A673 (cell line): ENCODE measurements at regions of chrX and their contacts with region 1.

Region 1: DNA sequence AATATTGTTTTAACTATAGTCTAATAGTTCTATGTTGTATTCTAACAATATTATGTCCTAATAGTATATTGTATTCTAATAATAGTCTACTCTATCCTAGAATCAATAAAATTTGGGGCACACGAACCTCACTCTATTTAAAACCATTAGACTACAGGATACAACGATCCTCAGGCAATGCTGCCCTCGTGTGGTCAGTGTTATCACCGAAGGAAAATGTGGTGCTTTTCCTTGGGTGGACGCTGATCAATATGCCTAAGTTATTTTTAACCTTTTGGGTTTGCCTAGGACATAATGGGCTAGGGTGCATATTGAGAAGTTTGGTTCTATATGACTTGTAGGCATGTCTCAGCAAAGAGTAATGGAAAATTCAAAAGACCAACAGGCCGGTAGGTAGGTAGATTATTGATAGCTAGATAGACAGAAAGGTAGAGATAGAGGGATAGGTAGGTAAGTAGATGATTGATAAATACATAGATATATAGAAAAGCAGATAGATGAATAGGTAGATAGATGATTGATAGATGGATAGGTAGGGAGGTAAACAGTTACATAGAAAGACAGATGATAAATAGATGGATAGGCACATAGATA is 75.1 kb downstream of the PRKX start:
- DNase-seq: peak; percentile 61
- H3K4me3 ChIP-seq: no peak overlapping the region
- H3K27ac ChIP-seq: no peak overlapping the region
- H3K4me1 ChIP-seq: no peaks in the 10 kb centered on the region
- H3K27me3 ChIP-seq: no peaks in the 10 kb centered on the region
- CTCF ChIP-seq: peak; percentile 82

Region 2: DNA sequence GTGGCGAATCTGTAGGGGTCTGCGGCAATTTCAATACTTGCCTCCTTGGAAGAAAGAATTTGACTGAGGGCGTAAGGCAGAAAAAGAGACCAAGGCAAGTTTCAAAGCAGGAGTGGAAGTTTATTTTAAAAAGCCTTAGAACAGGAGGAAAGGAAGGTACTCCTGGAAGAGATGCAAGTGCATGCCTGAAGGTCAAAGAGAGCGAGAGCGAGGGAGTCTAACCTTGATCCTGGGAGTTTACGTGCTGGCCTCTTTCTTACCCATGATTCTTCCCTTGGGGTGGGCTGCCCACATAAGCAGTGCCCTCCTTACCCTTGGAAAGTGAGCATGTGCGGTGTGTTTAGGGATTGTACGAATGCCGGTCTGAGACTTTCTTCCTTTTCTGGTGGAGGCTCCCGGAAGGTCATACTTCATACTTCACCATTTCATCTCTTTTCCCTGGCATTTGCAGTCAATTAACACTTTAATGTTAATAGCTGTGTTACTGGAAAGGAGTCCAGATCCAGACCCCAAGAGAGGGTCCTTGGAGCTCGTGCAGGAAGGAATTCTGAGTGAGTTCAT is 749.3 kb before region 1 on chrX:
- CTCF ChIA-PET with region 1: no interaction called
- POLR2A ChIA-PET with region 1: no interaction called
- intact Hi-C with region 1: loop called (anchors 10 kb)
- DNase-seq: no peak
- H3K4me3 ChIP-seq: peak overlapping the region; percentile 49
- H3K27ac ChIP-seq: no peak overlapping the region
- H3K4me1 ChIP-seq: peaks cover 15% of the 10 kb centered on the region
- H3K27me3 ChIP-seq: no peaks in the 10 kb centered on the region
- CTCF ChIP-seq: no peak

Region 3: DNA sequence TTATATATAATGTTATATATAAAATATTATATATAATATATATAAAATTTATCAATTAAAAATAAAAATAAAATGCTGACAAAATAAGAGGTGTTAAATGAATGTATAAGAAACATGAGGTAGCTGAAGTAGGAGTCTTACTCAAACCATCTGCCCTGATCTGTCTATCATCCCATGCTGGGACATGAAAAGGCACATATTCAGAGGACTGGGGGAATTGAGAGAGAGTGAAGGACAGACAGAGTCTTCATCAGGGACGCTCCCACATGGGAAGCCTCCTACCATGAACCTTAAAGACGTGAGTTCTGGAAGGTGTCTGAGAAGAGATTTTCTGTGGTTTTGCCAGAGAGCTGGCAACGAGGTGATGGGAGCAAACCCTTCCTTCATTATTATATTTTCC is 601.2 kb before region 1 on chrX:
- CTCF ChIA-PET with region 1: no interaction called
- POLR2A ChIA-PET with region 1: no interaction called
- intact Hi-C with region 1: loop called (anchors 5 kb)
- DNase-seq: no peak
- H3K4me3 ChIP-seq: no peak overlapping the region
- H3K27ac ChIP-seq: no peak overlapping the region
- H3K4me1 ChIP-seq: no peaks in the 10 kb centered on the region
- H3K27me3 ChIP-seq: peaks cover 10% of the 10 kb centered on the region
- CTCF ChIP-seq: no peak

Region 4: GRCh38 chrX:3119376-3119775 is 519.0 kb before region 1 on chrX:
- CTCF ChIA-PET with region 1: interaction called, 5 read pairs
- POLR2A ChIA-PET with region 1: no interaction called
- intact Hi-C with region 1: loop called (anchors 5 kb)
- DNase-seq: no peak
- H3K4me3 ChIP-seq: no peak overlapping the region
- H3K27ac ChIP-seq: no peak overlapping the region
- H3K4me1 ChIP-seq: no peaks in the 10 kb centered on the region
- H3K27me3 ChIP-seq: no peaks in the 10 kb centered on the region
- CTCF ChIP-seq: no peak

Region 5: GRCh38 chrX:3501833-3502535 is 136.4 kb before region 1 on chrX:
- CTCF ChIA-PET with region 1: no interaction called
- POLR2A ChIA-PET with region 1: no interaction called
- intact Hi-C with region 1: no loop called
- DNase-seq: no peak
- H3K4me3 ChIP-seq: no peak overlapping the region
- H3K27ac ChIP-seq: no peak overlapping the region
- H3K4me1 ChIP-seq: no peaks in the 10 kb centered on the region
- H3K27me3 ChIP-seq: peaks cover 4% of the 10 kb centered on the region
- CTCF ChIP-seq: no peak